OCI-LY7 (cell line): ENCODE measurements at regions of chr14 and their contacts with region 1.

Region 1: DNA sequence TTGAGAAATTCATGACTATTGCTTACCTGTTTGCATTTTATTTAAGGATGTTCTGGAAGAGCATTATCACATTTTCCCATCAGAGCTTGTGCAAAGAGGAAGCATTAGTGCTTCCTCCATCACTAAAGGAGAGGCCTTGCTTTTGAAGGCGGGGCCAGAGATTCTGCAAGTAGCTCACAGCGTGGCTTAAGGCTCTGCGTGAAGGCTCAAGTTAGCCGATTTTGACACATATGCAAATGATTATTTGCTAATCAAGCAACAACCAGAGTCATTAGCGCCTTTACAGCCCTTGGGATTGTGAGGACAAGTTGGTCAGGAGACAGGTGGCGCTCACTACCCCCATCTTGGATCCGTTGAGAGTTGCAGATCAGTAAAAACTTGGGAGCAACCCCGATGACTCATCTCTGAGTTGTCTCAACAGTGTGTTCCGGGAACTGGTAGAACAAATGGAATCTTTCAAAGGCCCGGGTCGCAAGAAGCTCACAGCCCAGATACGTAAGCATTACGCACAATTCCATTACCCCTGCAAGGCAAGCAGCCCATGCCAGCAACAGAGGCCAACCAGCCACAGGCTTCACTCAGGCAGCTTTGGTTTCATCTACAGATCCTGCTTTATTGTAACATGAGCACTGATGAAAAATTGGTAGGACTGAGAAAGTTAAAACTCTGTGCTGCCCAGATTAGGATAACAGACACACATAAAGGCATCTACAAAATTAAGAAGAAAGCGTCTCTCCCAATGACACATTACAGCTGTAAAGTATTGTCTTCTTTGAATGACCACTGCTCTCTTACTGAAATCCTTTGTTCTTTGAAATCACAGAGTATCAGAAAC is 34.9 kb upstream of the SPTSSA start:
- DNase-seq: no peak
- H3K4me3 ChIP-seq: no peak overlapping the region
- H3K27ac ChIP-seq: no peak overlapping the region
- H3K4me1 ChIP-seq: no peaks in the 10 kb centered on the region
- CTCF ChIP-seq: no peak

Region 2: GRCh38 chr14:34331728-34332623 is 164.9 kb before region 1 on chr14:
- CTCF ChIA-PET with region 1: no interaction called
- POLR2A ChIA-PET with region 1: no interaction called
- intact Hi-C with region 1: loop called (anchors 1 kb)
- DNase-seq: peak; percentile 74
- H3K4me3 ChIP-seq: peak overlapping the region; percentile 6
- H3K27ac ChIP-seq: peak overlapping the region; percentile 22
- H3K4me1 ChIP-seq: peaks cover 24% of the 10 kb centered on the region
- CTCF ChIP-seq: peak; percentile 94

Region 3: DNA sequence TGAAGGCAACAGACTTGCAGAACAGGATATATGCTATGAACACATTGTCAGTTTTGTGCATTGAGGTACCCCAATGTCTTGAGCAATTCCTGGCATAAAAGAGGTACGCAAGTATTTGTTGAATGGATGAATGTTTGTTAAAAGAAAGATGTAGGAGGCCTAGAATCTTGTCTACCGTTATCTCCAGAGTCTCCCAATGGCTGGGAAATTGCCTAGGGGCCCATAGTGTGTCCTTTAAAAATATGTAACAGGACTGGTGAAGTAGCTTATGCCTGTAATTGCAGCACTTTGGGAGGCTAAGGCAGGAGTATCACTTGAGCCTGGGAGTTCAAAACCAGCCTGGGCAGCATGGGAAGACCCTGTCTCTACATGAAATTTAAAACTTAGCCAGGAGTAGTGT is 14.4 kb before region 1 on chr14:
- CTCF ChIA-PET with region 1: no interaction called
- POLR2A ChIA-PET with region 1: interaction called, 10 read pairs
- intact Hi-C with region 1: no loop called
- DNase-seq: no peak
- H3K4me3 ChIP-seq: no peak overlapping the region
- H3K27ac ChIP-seq: no peak overlapping the region
- H3K4me1 ChIP-seq: no peaks in the 10 kb centered on the region
- CTCF ChIP-seq: no peak

Region 4: DNA sequence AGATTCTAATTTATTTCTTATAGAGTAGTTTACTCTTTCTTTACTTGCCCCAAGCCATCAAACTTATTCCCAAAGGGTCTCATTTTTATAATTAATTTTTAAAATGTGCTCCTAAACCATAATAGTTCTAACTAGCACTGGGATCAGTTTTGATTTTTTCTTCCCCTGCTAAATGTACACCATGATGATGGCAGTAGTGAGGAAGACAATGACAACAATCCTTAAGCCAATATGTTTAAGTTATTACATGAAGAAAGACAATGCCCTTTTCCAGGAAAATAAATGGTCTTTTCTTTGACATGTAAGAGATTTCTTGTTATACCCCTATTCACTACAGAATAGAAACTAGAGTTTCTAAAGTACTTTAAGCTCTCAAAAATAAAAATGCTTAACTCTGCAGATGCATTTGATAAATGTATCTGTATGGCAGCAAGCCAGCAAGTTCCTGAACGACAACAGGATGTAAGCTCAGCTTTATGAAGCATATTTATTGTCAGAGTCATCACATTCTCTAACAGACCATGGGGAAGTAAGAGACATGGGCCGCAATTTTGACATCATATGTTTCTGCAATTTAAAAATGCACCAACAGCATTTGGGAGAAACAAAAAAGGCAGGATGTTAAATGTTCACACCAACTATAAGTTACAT is 169.0 kb after region 1 on chr14:
- CTCF ChIA-PET with region 1: no interaction called
- POLR2A ChIA-PET with region 1: no interaction called
- intact Hi-C with region 1: no loop called
- DNase-seq: peak; percentile 15
- H3K4me3 ChIP-seq: no peak overlapping the region
- H3K27ac ChIP-seq: no peak overlapping the region
- H3K4me1 ChIP-seq: peaks cover 18% of the 10 kb centered on the region
- CTCF ChIP-seq: no peak

Region 5: GRCh38 chr14:34951271-34951670 is 454.4 kb after region 1 on chr14:
- CTCF ChIA-PET with region 1: no interaction called
- POLR2A ChIA-PET with region 1: no interaction called
- intact Hi-C with region 1: no loop called
- DNase-seq: no peak
- H3K4me3 ChIP-seq: no peak overlapping the region
- H3K27ac ChIP-seq: no peak overlapping the region
- H3K4me1 ChIP-seq: no peaks in the 10 kb centered on the region
- CTCF ChIP-seq: no peak